ENCODE measurements at regions of chr11 and their contacts with region 1.

Region 1: GRCh38 chr11:43687120-43687791 is 6.7 kb downstream of the HSD17B12 start:
- DNase-seq: peak; percentile 27 to 82
- ATAC-seq: peak; percentile 97 to 100
- H3K4me3 ChIP-seq: no peak overlapping the region
- H3K27ac ChIP-seq: peak overlapping the region; percentile 62 to 85 (median 74)
- H3K4me1 ChIP-seq: peaks cover 45 to 54% of the 10 kb centered on the region in 2 donors
- H3K27me3 ChIP-seq: no peaks in the 10 kb centered on the region
- CTCF ChIP-seq: no peak
- POLR2A ChIP-seq: no peak

Region 2: GRCh38 chr11:43738590-43739409 is 51.5 kb after region 1 on chr11:
- in situ Hi-C with region 1: no loop called
- intact Hi-C with region 1: loop called (anchors 5 kb)
- DNase-seq: peak in 1 of 2 donors; percentile 14
- ATAC-seq: peak; percentile 65 to 88
- H3K4me3 ChIP-seq: peak overlapping the region in 1 of 4 donors; percentile 3
- H3K27ac ChIP-seq: peak overlapping the region; percentile 12 to 74 (median 46)
- H3K4me1 ChIP-seq: peaks cover 36 to 39% of the 10 kb centered on the region in 2 donors
- H3K27me3 ChIP-seq: no peaks in the 10 kb centered on the region
- CTCF ChIP-seq: no peak
- POLR2A ChIP-seq: no peak